MCF 10A (cell line): ENCODE measurements at regions of chr7 and their contacts with region 1.

Region 1: DNA sequence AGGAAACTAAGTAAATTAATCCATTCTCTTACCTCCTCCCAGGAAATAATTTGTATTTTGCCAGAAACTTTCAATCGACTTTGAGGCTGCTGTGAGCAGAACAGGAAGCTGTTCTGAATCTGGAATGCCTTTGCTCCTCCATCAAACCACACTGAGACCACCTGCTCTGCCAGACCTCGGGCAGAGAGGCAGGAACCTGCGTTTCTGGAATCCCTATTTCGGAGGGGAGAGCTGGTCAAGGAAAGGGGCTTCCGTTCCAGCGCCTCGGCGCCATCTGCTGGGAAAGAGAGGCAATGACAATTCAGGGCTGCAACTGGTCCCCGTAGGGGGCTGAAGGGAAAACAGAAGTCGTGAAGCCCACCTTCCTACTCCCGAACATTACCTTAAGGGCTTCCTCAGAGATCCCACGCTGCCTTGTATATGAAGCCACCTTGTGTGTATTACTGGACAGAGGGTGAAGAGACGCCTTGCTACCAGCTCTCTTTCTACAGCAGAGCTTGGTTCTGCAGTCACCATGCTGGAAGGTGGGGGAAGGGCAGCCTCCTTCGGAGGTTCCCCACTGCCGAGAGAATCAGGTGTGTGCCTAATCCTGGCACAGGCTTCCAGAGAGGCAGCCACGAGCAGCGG is 31.2 kb downstream of the ZNF467 start:
- DNase-seq: peak; percentile 67
- H3K4me3 Mint-ChIP-seq: peak overlapping the region; percentile 71
- H3K27ac Mint-ChIP-seq: no peak overlapping the region
- H3K4me1 Mint-ChIP-seq: peaks cover 8% of the 10 kb centered on the region
- H3K27me3 Mint-ChIP-seq: no peaks in the 10 kb centered on the region
- CTCF ChIP-seq: peak; percentile 93

Region 2: GRCh38 chr7:148699782-148700629 is 1042.2 kb before region 1 on chr7:
- CTCF ChIA-PET with region 1: no interaction called
- POLR2A ChIA-PET with region 1: no interaction called
- intact Hi-C with region 1: no loop called
- DNase-seq: peak; percentile 41
- H3K4me3 Mint-ChIP-seq: peak overlapping the region; percentile 85
- H3K27ac Mint-ChIP-seq: peak overlapping the region; percentile 71
- H3K4me1 Mint-ChIP-seq: peaks cover 50% of the 10 kb centered on the region
- H3K27me3 Mint-ChIP-seq: no peaks in the 10 kb centered on the region
- CTCF ChIP-seq: no peak

Region 3: GRCh38 chr7:149662591-149663095 is 79.5 kb before region 1 on chr7:
- CTCF ChIA-PET with region 1: interaction called, 11 read pairs
- POLR2A ChIA-PET with region 1: interaction called, 3 read pairs
- intact Hi-C with region 1: loop called (anchors 1 kb)
- DNase-seq: peak; percentile 84
- H3K4me3 Mint-ChIP-seq: no peak overlapping the region
- H3K27ac Mint-ChIP-seq: peak overlapping the region; percentile 13
- H3K4me1 Mint-ChIP-seq: no peaks in the 10 kb centered on the region
- H3K27me3 Mint-ChIP-seq: peaks cover 60% of the 10 kb centered on the region
- CTCF ChIP-seq: peak; percentile 54

Region 4: DNA sequence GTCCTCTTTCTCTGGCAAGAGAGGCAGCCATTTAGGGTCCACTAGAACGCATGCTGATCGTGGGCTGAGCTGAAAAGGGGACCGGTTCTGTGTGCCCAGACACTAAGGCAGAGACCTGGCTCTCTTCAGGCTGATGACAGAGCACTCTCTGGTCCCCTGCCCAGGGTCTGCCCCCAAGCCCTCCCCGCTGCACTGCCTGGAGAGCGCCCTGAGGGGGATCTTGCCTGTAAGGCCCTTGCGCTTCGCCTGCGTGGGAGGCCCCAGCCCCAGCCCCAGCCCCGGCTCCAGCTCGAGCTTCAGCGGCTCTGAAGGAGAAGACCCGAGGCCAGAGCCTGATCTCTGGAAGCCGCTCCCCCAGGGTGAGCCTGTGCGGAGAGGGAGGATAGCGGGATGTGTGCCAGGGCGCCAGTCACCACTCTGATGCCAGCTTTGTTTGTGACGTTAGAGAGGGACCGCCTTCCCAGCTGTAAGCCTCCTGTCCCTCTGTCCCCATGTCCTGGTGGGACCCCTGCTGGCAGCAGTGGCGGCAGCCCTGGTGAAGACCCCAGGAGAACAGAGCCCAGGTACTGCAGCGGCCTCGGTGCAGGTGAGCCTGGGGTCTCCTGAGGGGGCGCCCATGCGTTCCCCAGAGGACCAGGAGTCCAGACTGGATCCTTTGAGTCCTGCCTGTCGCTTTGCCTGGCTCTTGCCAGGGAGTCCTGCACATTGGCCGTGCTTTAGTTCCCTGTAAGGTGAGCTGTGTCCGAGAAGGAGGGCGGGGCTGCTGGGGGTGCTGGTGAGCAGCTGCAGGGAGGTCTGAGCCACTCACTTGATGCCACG is 12.0 kb before region 1 on chr7:
- CTCF ChIA-PET with region 1: interaction called, 39 read pairs
- POLR2A ChIA-PET with region 1: no interaction called
- intact Hi-C with region 1: no loop called
- DNase-seq: no peak
- H3K4me3 Mint-ChIP-seq: no peak overlapping the region
- H3K27ac Mint-ChIP-seq: no peak overlapping the region
- H3K4me1 Mint-ChIP-seq: peaks cover 11% of the 10 kb centered on the region
- H3K27me3 Mint-ChIP-seq: no peaks in the 10 kb centered on the region
- CTCF ChIP-seq: no peak

Region 5: GRCh38 chr7:149759111-149759860 is 17.1 kb after region 1 on chr7:
- CTCF ChIA-PET with region 1: interaction called, 13 read pairs
- POLR2A ChIA-PET with region 1: no interaction called
- intact Hi-C with region 1: no loop called
- DNase-seq: no peak
- H3K4me3 Mint-ChIP-seq: no peak overlapping the region
- H3K27ac Mint-ChIP-seq: no peak overlapping the region
- H3K4me1 Mint-ChIP-seq: peaks cover 5% of the 10 kb centered on the region
- H3K27me3 Mint-ChIP-seq: peaks cover 24% of the 10 kb centered on the region
- CTCF ChIP-seq: no peak

Region 6: GRCh38 chr7:149771721-149772240 is 29.6 kb after region 1 on chr7:
- CTCF ChIA-PET with region 1: interaction called, 15 read pairs
- POLR2A ChIA-PET with region 1: interaction called, 5 read pairs
- intact Hi-C with region 1: no loop called
- DNase-seq: peak; percentile 87
- H3K4me3 Mint-ChIP-seq: peak overlapping the region; percentile 82
- H3K27ac Mint-ChIP-seq: no peak overlapping the region
- H3K4me1 Mint-ChIP-seq: no peaks in the 10 kb centered on the region
- H3K27me3 Mint-ChIP-seq: no peaks in the 10 kb centered on the region
- CTCF ChIP-seq: no peak

Region 7: GRCh38 chr7:149822353-149822943 is 80.3 kb after region 1 on chr7:
- CTCF ChIA-PET with region 1: no interaction called
- POLR2A ChIA-PET with region 1: no interaction called
- intact Hi-C with region 1: no loop called
- DNase-seq: no peak
- H3K4me3 Mint-ChIP-seq: no peak overlapping the region
- H3K27ac Mint-ChIP-seq: no peak overlapping the region
- H3K4me1 Mint-ChIP-seq: no peaks in the 10 kb centered on the region
- H3K27me3 Mint-ChIP-seq: no peaks in the 10 kb centered on the region
- CTCF ChIP-seq: no peak